ENCODE measurements at regions of chr22 and their contacts with region 1.

Region 1: GRCh38 chr22:39003165-39003638 is 10.9 kb upstream of the APOBEC3C start:
- DNase-seq: peak; percentile 75 to 82 (median 76)
- H3K4me3 ChIP-seq: no peak overlapping the region
- H3K4me3 Mint-ChIP-seq: peak overlapping the region in 2 of 8 donors; percentile 5 to 8
- H3K27ac ChIP-seq: no peak overlapping the region
- H3K27ac Mint-ChIP-seq: peak overlapping the region; percentile 15 to 84 (median 60)
- H3K4me1 ChIP-seq: peaks cover 16% of the 10 kb centered on the region
- H3K4me1 Mint-ChIP-seq: peaks cover 8 to 14% (median 13%) of the 10 kb centered on the region in 4 donors
- H3K27me3 ChIP-seq: no peaks in the 10 kb centered on the region
- H3K27me3 Mint-ChIP-seq: no peaks in the 10 kb centered on the region

Region 2: DNA sequence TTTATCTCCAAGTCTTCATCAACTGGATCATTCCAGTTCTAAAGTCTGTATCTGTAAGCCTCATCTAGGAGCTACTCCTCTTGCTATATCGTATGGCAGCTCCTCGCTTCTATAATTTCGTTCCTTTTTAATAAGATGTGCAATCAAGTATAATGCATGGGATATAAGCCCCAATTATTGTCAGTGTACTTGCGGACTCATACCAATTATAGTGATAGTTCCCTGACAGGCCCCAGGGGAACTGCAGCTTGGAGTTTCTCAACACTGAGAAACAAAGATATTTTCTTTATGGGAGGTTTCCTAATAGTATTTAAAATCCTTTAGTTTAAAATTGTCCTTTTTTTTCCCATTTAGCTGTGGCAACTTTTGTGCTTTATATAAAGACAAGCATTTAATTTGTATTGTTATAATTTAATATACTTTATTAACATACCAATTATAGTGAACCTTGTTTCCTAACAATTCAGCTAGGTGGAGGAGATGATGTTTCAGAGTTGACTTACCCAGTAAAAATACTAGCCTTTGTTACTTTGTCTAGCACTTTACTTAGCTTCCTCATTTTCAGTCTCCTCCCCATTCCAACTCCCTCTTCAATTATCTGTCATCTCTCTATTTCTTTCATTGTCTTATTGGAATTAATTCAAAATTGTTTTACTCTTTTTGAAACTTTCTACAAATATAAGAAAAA is 471.8 kb before region 1 on chr22:
- CTCF ChIA-PET with region 1: no interaction called
- POLR2A ChIA-PET with region 1: no interaction called
- intact Hi-C with region 1: no loop called
- DNase-seq: peak in 1 of 5 donors; percentile 3
- H3K4me3 ChIP-seq: no peak overlapping the region
- H3K4me3 Mint-ChIP-seq: peak overlapping the region in 6 of 8 donors; percentile 9 to 75 (median 51)
- H3K27ac ChIP-seq: no peak overlapping the region
- H3K27ac Mint-ChIP-seq: peak overlapping the region; percentile 5 to 92 (median 79)
- H3K4me1 ChIP-seq: peaks cover 15% of the 10 kb centered on the region
- H3K4me1 Mint-ChIP-seq: peaks cover 5 to 7% (median 6%) of the 10 kb centered on the region in 4 donors
- H3K27me3 ChIP-seq: no peaks in the 10 kb centered on the region
- H3K27me3 Mint-ChIP-seq: no peaks in the 10 kb centered on the region

Region 3: DNA sequence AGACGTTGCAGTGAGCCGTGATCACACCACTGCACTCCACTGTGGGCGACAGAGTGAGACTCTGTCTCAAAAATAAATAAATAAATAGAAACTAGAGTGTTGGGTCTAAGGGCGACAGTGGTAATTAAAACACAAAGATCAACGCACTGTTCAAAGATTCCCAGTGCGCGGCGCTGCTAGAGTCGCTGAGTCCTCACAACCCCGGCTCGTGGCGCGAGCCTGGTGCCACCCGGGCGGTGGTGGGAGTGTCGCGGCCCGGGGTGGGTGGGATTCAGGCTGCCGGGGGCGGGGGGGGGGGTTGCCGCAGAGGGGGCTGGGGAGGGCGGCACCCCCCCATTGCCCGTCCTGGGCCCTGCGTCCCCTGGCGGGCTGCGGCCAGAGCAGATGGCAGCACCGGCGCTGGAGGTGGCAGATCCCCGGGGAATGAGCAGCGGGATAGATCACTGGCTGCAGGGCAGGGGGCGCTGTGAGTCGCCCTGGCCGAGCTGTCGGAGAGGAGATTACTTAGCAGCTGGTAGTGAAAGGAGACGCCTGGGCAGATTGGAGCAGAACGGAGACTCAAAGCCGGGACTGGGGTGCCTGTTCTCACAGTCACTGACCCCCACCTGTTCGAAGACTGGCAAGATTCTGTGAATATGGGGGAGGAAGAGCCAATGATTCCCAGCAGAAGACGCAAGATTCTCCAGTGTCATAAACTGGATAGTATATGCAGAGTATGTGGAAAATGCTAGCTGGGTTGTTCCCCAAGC is 76.0 kb before region 1 on chr22:
- CTCF ChIA-PET with region 1: interaction called, 7 read pairs
- POLR2A ChIA-PET with region 1: no interaction called
- intact Hi-C with region 1: loop called (anchors 1 kb)
- DNase-seq: peak in 3 of 5 donors; percentile 5 to 27 (median 12)
- H3K4me3 ChIP-seq: no peak overlapping the region
- H3K4me3 Mint-ChIP-seq: peak overlapping the region in 7 of 8 donors; percentile 48 to 83 (median 69)
- H3K27ac ChIP-seq: no peak overlapping the region
- H3K27ac Mint-ChIP-seq: no peak overlapping the region
- H3K4me1 ChIP-seq: no peaks in the 10 kb centered on the region
- H3K4me1 Mint-ChIP-seq: peaks cover 3 to 5% (median 4%) of the 10 kb centered on the region in 4 donors
- H3K27me3 ChIP-seq: no peaks in the 10 kb centered on the region
- H3K27me3 Mint-ChIP-seq: peaks cover 17 to 23% of the 10 kb centered on the region in 2 donors

Region 4: DNA sequence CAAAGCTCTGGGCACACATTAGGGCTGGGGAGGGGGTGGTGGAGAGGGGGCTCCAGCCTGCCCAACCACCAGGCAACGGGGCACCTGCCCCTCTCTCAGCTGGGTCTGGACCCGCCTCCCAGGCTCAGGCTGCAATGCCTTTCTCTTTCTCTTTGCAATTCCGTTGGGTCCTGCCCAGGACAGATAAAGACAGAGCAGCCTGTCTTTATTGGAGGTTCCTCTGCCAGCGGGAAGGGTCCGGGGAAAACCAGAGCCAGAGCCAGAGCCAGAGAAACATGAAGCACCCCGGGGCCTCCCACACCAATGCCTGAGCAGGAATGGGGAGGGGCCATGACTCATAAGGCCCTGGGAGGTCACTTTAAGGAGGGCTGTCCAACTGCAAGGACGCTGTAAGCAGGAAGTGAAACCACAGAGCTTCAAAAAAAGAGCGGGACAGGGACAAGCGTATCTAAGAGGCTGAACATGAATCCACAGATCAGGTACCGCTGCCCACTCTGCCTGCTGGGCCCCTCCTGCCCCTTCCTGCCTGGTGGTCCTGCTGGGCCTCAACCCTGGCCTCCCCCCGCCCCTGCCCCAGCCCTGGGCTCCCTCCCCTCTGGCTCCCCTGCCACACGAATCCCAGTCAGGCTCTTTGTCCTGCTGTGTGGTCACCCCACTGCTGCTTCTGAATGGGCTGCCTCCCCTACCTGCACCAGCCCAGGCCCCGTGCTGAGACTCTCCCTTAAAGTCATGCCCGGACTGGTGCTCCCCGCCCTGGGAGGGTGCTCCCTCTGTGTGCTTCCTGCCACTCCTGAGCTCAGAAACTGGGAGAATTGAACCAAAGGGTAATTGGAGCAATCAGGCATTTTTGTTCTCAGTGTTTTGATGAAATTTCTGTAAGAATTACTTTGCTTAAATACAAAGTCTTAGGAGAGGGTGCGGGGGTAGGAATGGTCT is 20.9 kb before region 1 on chr22 and contains the start of gene APOBEC3B:
- CTCF ChIA-PET with region 1: interaction called, 10 read pairs
- POLR2A ChIA-PET with region 1: interaction called, 7 read pairs
- intact Hi-C with region 1: loop called (anchors 2 kb)
- DNase-seq: peak; percentile 43 to 89 (median 65)
- H3K4me3 ChIP-seq: peak within 1 kb of the TSS; percentile 28 to 36
- H3K4me3 Mint-ChIP-seq: peak within 1 kb of the TSS; percentile 85 to 94 (median 87)
- H3K27ac ChIP-seq: peak within 1 kb of the TSS; percentile 21
- H3K27ac Mint-ChIP-seq: peak within 1 kb of the TSS; percentile 48 to 97 (median 82)
- H3K4me1 ChIP-seq: peaks cover 43% of the 10 kb centered on the region
- H3K4me1 Mint-ChIP-seq: peaks cover 25 to 52% (median 29%) of the 10 kb centered on the region in 4 donors
- H3K27me3 ChIP-seq: no peaks in the 10 kb centered on the region
- H3K27me3 Mint-ChIP-seq: peaks cover 0 to 1% of the 10 kb centered on the region in 2 donors
- total RNA-seq, gene APOBEC3B: 0.32 to 0.64 TPM

Region 5: GRCh38 chr22:39117585-39118191 is 114.5 kb after region 1 on chr22:
- CTCF ChIA-PET with region 1: interaction called, 101 read pairs
- POLR2A ChIA-PET with region 1: interaction called, 6 read pairs
- intact Hi-C with region 1: loop called (anchors 1 kb)
- DNase-seq: peak; percentile 69 to 88 (median 73)
- H3K4me3 ChIP-seq: no peak overlapping the region
- H3K4me3 Mint-ChIP-seq: peak overlapping the region; percentile 53 to 82 (median 74)
- H3K27ac ChIP-seq: peak overlapping the region; percentile 52
- H3K27ac Mint-ChIP-seq: peak overlapping the region; percentile 77 to 92 (median 88)
- H3K4me1 ChIP-seq: peaks cover 35% of the 10 kb centered on the region
- H3K4me1 Mint-ChIP-seq: peaks cover 29 to 49% (median 34%) of the 10 kb centered on the region in 4 donors
- H3K27me3 ChIP-seq: no peaks in the 10 kb centered on the region
- H3K27me3 Mint-ChIP-seq: no peaks in the 10 kb centered on the region

Region 6: DNA sequence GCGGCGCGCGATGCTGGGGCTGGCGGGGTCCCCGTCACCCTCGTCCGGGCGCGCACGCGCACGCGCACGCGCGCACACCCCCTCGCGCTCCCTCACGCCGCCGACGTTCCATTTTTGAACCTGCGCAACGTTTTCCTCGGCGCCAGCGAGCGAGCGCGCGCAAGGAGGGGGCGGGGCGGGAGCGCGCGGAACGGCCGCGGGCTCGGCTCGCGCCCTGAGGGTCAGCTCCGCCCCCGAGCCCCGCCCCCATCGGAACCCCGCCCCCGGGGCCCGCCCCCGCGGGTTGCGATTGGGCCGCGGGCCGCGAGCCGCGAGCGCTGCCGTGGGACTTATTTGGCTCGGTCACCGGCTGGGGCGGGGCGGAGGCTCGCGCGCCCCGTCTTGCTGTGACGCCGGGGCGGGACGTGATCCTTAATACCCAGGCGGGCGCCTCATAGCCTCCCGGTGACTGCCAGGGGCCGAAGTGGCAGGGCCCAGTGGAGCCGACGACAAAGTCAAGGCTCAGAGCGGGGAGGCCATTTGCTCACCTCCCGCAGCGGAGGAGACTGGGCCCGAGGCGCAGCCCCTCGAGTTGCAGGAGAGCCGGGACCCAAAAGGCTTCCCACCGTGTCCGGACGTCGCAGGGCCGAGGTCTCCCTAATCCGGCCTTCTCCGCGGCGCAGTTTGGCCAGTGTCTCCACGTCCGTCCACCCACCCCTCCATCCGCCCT is 149.5 kb after region 1 on chr22 and contains the start of gene CBX7:
- CTCF ChIA-PET with region 1: interaction called, 12 read pairs
- POLR2A ChIA-PET with region 1: no interaction called
- intact Hi-C with region 1: no loop called
- DNase-seq: peak; percentile 90 to 96 (median 94)
- H3K4me3 ChIP-seq: peak within 1 kb of the TSS; percentile 55 to 79
- H3K4me3 Mint-ChIP-seq: peak within 1 kb of the TSS; percentile 84 to 91 (median 88)
- H3K27ac ChIP-seq: peak within 1 kb of the TSS; percentile 78
- H3K27ac Mint-ChIP-seq: peak within 1 kb of the TSS; percentile 88 to 99 (median 93)
- H3K4me1 ChIP-seq: peaks cover 51% of the 10 kb centered on the region
- H3K4me1 Mint-ChIP-seq: peaks cover 22 to 48% (median 35%) of the 10 kb centered on the region in 4 donors
- H3K27me3 ChIP-seq: peaks cover 7% of the 10 kb centered on the region
- H3K27me3 Mint-ChIP-seq: peaks cover 0 to 3% of the 10 kb centered on the region in 2 donors
- total RNA-seq, gene CBX7: 181 to 198 TPM

Region 7: DNA sequence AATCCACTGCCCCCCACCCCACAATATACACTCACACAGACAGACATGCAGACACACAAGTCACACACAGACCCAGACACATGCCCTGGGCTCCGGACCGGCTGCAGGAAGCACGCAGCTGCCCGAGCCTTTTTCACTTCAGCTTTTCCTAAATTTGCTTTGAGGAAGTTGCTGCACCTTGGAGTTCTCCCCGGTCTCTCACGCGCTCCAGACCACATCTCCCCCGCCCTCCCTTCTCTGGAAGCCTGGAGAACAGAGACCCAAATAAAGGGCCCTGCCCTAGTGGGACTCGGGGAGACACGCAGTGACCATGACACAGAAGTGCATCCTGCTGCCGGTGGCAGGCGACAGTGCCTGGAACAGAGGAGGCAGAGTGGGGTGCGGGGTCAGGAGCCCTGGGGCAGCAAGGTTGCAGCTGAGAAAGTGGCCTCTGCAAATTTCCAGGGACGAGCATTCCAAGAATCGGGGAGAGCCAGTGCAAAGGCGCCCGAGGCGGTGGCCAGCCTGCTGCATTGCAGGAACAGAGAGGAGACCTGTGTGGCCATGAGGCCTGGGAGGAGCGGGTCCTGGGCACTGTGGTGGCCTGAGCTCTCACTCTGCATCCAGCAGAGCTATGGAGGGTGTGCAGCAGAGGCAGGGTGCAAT is 297.1 kb after region 1 on chr22:
- CTCF ChIA-PET with region 1: no interaction called
- POLR2A ChIA-PET with region 1: no interaction called
- intact Hi-C with region 1: no loop called
- DNase-seq: no peak
- H3K4me3 ChIP-seq: no peak overlapping the region
- H3K4me3 Mint-ChIP-seq: no peak overlapping the region
- H3K27ac ChIP-seq: no peak overlapping the region
- H3K27ac Mint-ChIP-seq: no peak overlapping the region
- H3K4me1 ChIP-seq: peaks cover 6% of the 10 kb centered on the region
- H3K4me1 Mint-ChIP-seq: peaks cover 2 to 12% (median 7%) of the 10 kb centered on the region in 4 donors
- H3K27me3 ChIP-seq: no peaks in the 10 kb centered on the region
- H3K27me3 Mint-ChIP-seq: peaks cover 15 to 20% of the 10 kb centered on the region in 2 donors